ENCODE measurements at regions of chr15 and their contacts with region 1.

Region 1: GRCh38 chr15:39801641-39802309 is 19.1 kb upstream of the FSIP1 start:
- DNase-seq: peak; percentile 16 to 52
- H3K4me3 ChIP-seq: no peak overlapping the region
- H3K4me1 ChIP-seq: no peaks in the 10 kb centered on the region
- H3K27me3 ChIP-seq: no peaks in the 10 kb centered on the region

Region 2: GRCh38 chr15:39594056-39594763 is 207.6 kb before region 1 on chr15:
- in situ Hi-C with region 1: no loop called
- DNase-seq: no peak
- H3K4me3 ChIP-seq: no peak overlapping the region
- H3K4me1 ChIP-seq: peaks cover 12% of the 10 kb centered on the region
- H3K27me3 ChIP-seq: no peaks in the 10 kb centered on the region

Region 3: GRCh38 chr15:39874890-39875549 is 73.2 kb after region 1 on chr15:
- in situ Hi-C with region 1: loop called (anchors 10 kb)
- DNase-seq: peak; percentile 36 to 46
- H3K4me3 ChIP-seq: no peak overlapping the region
- H3K4me1 ChIP-seq: no peaks in the 10 kb centered on the region
- H3K27me3 ChIP-seq: no peaks in the 10 kb centered on the region

Region 4: GRCh38 chr15:40092256-40092978 is 290.6 kb after region 1 on chr15:
- in situ Hi-C with region 1: no loop called
- DNase-seq: peak; percentile 93 to 95
- H3K4me3 ChIP-seq: no peak overlapping the region
- H3K4me1 ChIP-seq: peaks cover 75% of the 10 kb centered on the region
- H3K27me3 ChIP-seq: no peaks in the 10 kb centered on the region